H1 (cell line): ENCODE measurements at regions of chrX and their contacts with region 1.

Region 1: DNA sequence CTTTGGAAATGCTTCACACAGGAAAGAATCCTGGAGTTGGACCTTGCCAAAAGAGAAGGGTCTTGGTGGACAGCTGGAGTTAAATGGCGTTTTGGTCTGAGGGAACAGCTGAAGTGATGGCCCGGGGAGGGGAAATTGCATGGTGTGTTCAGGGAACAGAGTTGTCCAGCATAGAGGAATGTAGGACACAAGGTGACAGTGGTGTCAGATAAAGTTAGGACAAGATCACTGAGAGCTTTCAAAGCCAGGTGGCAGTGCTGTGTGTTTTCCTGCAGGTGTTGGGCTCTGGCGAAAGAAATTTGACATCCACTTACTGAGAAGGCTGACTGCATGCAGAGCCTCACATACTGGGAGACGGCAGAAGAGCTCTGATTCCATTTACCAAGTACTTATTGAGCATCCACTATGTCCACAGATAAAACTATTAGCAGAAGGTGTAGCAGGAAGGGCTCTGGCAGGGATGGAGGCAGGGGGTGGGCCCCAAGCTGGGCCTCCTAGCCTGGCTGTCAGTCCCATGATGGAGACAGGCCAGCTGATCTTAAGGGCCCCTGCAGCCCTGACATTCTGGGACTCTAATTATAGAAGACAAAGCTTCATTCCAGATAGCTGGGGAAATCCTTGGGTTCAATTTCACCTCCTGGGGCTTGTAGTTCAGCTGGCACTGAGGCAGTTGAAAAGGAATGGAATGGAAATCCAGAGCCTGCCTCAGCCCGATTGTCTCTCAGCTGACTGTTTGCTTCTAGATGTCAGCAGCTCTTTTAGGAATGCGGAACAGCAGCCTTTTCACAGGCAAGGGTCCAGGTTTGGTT is 150.2 kb upstream of the MAMLD1 start:
- DNase-seq: no peak
- H3K4me3 ChIP-seq: no peak overlapping the region
- H3K27ac ChIP-seq: no peak overlapping the region
- H3K4me1 ChIP-seq: peaks cover 0 to 3% (median under 1%) of the 10 kb centered on the region in 4 experiments; a peak in 1 of 7 replicates
- H3K27me3 ChIP-seq: no peaks in the 10 kb centered on the region
- CTCF ChIP-seq: peak in 2 of 3 experiments; percentile 26 to 40; a peak in 3 of 4 replicates
- EP300 ChIP-seq: no peak
- POLR2A ChIP-seq: no peak
- RAD21 ChIP-seq: peak; percentile 31 to 47; a peak in 3 of 4 replicates

Region 2: GRCh38 chrX:150362599-150363481 is 150.0 kb after region 1 on chrX and contains the start of gene MAMLD1:
- CTCF ChIA-PET with region 1: interaction called, 12 read pairs
- POLR2A ChIA-PET with region 1: no interaction called
- DNase-seq: peak in 1 of 2 experiments; percentile 47
- H3K4me3 ChIP-seq: peak within 1 kb of the TSS; percentile 40 to 66 (median 46)
- H3K27ac ChIP-seq: no peak within 1 kb of the TSS
- H3K4me1 ChIP-seq: peaks cover 0 to 8% (median 4%) of the 10 kb centered on the region in 4 experiments; a peak in 5 of 7 replicates
- H3K27me3 ChIP-seq: peaks cover 38 to 72% (median 65%) of the 10 kb centered on the region in 4 experiments
- CTCF ChIP-seq: no peak
- EP300 ChIP-seq: no peak
- POLR2A ChIP-seq: no peak
- RAD21 ChIP-seq: no peak
- total RNA-seq, gene MAMLD1: 0.09 and 0.11 TPM in 2 replicates